HepG2 (cell line): ENCODE measurements at regions of chr19 and their contacts with region 1.

Region 1: DNA sequence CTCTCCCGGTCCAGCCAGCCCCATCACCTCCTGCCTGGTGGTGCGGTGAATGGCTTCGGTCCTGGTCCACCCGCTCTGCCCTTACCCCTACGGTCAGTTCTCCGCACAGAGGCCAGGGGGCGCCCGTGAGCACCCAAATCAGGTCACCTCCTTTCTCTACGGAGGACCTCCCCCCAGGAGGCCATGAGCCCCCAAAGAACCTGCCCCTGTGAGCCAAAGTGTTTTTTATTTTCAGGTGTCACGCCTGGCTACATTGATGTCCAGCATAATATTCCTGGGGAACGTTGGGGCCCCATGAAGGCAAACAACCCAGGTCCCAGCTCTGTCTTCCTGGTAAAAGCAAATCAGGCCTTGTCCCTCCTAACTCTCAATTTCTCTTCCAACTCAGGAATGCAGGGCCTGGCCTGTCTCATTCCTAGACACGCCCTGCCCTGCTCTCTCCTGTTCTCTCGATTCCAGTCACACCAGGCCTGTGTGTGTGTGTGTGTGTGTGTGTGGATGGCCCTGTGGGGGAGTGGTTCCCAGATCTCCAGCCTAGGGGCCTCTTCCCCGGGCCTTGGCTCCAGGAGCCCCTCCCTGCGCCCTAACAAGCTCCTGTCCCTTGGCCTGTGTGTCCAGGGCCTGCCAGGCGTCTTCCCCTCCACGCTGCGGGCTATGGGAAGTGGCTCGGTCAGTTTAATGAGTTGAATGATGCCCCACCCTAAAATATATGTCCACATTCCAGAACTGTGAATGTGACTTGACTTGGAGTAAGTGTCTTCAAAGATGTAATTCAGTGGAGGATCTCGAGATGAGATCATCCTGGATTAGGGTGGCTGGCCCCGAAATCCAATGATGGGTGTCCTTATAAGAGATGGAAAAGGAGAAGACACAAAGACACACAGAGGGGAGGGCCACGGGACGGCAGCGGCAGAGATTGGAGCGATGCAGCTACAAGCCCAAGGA is 9.8 kb upstream of the GIPC1 start:
- DNase-seq: peak; percentile 64
- ATAC-seq: peak; percentile 83
- H3K4me3 ChIP-seq: peak overlapping the region; percentile 43 to 66 (median 50)
- H3K27ac ChIP-seq: peak overlapping the region; percentile 41
- H3K4me1 ChIP-seq: peaks cover 85% of the 10 kb centered on the region
- H3K27me3 ChIP-seq: no peaks in the 10 kb centered on the region
- CTCF ChIP-seq: peak; percentile 88
- EP300 ChIP-seq: no peak
- POLR2A ChIP-seq: no peak
- RAD21 ChIP-seq: peak; percentile 53; the same call in 1 of the 2 replicates

Region 2: GRCh38 chr19:14544977-14545715 is 39.4 kb after region 1 on chr19:
- CTCF ChIA-PET with region 1: no interaction called
- POLR2A ChIA-PET with region 1: no interaction called
- in situ Hi-C with region 1: loop called (anchors 5 kb)
- intact Hi-C with region 1: no loop called
- DNase-seq: no peak
- ATAC-seq: no peak
- H3K4me3 ChIP-seq: no peak overlapping the region
- H3K27ac ChIP-seq: no peak overlapping the region
- H3K4me1 ChIP-seq: peaks cover 2% of the 10 kb centered on the region; the same call in 1 of the 2 replicates
- H3K27me3 ChIP-seq: no peaks in the 10 kb centered on the region; a peak in 1 of 5 replicates
- CTCF ChIP-seq: no peak
- EP300 ChIP-seq: no peak
- POLR2A ChIP-seq: no peak
- RAD21 ChIP-seq: no peak

Region 3: DNA sequence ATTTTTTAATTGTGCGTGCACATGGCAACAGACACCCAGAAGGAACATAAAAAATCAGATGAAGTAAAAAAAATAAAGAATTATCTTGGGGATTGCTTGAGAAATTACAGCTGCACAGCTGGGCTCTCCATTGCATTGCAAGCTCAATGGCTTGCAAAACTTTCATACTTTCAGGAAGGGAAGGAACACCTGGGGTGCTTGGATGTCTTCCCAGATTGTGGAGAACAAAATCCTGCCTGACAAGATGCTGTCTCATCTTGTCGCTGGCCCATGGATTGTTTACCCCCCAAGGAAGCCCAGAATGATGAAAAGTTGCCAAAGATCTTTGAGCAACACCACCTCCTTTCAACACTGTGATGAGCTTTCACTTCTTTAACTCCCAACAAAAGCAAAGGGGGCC is 532.5 kb after region 1 on chr19:
- CTCF ChIA-PET with region 1: no interaction called
- POLR2A ChIA-PET with region 1: no interaction called
- in situ Hi-C with region 1: no loop called
- intact Hi-C with region 1: no loop called
- DNase-seq: no peak
- ATAC-seq: no peak
- H3K4me3 ChIP-seq: no peak overlapping the region
- H3K27ac ChIP-seq: no peak overlapping the region
- H3K4me1 ChIP-seq: no peaks in the 10 kb centered on the region
- H3K27me3 ChIP-seq: peaks cover 0 to 6% of the 10 kb centered on the region in 2 experiments; a peak in 2 of 5 replicates
- CTCF ChIP-seq: no peak
- EP300 ChIP-seq: no peak
- POLR2A ChIP-seq: no peak
- RAD21 ChIP-seq: no peak